ENCODE measurements at regions of chr3 and their contacts with region 1.

Region 1: GRCh38 chr3:45889337-45889736 is 3.0 kb downstream of the CCR9 start:
- DNase-seq: no peak
- ATAC-seq: no peak
- H3K4me3 ChIP-seq: no peak overlapping the region
- H3K27ac ChIP-seq: no peak overlapping the region
- H3K4me1 ChIP-seq: peaks cover 20% of the 10 kb centered on the region
- H3K27me3 ChIP-seq: no peaks in the 10 kb centered on the region
- CTCF ChIP-seq: no peak

Region 2: GRCh38 chr3:45868214-45868613 is 21.1 kb before region 1 on chr3:
- CTCF ChIA-PET with region 1: no interaction called
- POLR2A ChIA-PET with region 1: interaction called, 14 read pairs
- intact Hi-C with region 1: no loop called
- DNase-seq: peak; percentile 89
- ATAC-seq: peak; percentile 96
- H3K4me3 ChIP-seq: no peak overlapping the region
- H3K27ac ChIP-seq: peak overlapping the region; percentile 21; the same call in 1 of the 2 replicates
- H3K4me1 ChIP-seq: peaks cover 10% of the 10 kb centered on the region
- H3K27me3 ChIP-seq: no peaks in the 10 kb centered on the region
- CTCF ChIP-seq: no peak

Region 3: DNA sequence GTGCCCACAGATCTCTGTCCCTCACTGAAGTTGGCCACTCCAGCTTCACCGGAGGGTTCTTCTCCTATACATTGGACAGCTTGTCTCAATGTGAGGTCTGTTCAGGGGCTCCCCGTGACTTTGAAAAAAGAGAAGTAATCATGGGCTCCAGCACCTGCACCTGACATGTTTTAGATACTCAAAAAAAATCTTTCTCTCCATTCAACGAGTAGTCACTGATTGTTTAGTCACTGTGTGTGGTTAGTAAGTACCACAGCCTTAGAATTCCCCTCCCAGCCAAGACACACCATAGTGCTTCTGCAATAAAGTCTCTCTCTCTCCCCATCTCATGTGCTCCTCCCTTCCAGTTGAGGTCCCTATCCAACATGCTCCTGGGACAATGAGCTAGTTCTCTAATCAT is 15.6 kb after region 1 on chr3:
- CTCF ChIA-PET with region 1: no interaction called
- POLR2A ChIA-PET with region 1: no interaction called
- intact Hi-C with region 1: no loop called
- DNase-seq: no peak
- ATAC-seq: no peak
- H3K4me3 ChIP-seq: no peak overlapping the region
- H3K27ac ChIP-seq: no peak overlapping the region
- H3K4me1 ChIP-seq: no peaks in the 10 kb centered on the region
- H3K27me3 ChIP-seq: no peaks in the 10 kb centered on the region
- CTCF ChIP-seq: no peak

Region 4: GRCh38 chr3:46098319-46098761 is 209.0 kb after region 1 on chr3:
- CTCF ChIA-PET with region 1: no interaction called
- POLR2A ChIA-PET with region 1: no interaction called
- intact Hi-C with region 1: no loop called
- DNase-seq: peak; percentile 33
- ATAC-seq: no peak; the same call in 1 of the 2 replicates
- H3K4me3 ChIP-seq: no peak overlapping the region
- H3K27ac ChIP-seq: no peak overlapping the region
- H3K4me1 ChIP-seq: 0 out of 2 replicates have a peak, but pooled peaks cover 9% of the 10 kb centered on the region
- H3K27me3 ChIP-seq: no peaks in the 10 kb centered on the region
- CTCF ChIP-seq: no peak

Measured in PC-3 (cell line).